ENCODE measurements at regions of chr19 and their contacts with region 1.

Region 1: GRCh38 chr19:45439569-45440254 is 16.0 kb upstream of the ERCC1 start:
- DNase-seq: peak; percentile 94
- ATAC-seq: peak; percentile 71

Region 2: DNA sequence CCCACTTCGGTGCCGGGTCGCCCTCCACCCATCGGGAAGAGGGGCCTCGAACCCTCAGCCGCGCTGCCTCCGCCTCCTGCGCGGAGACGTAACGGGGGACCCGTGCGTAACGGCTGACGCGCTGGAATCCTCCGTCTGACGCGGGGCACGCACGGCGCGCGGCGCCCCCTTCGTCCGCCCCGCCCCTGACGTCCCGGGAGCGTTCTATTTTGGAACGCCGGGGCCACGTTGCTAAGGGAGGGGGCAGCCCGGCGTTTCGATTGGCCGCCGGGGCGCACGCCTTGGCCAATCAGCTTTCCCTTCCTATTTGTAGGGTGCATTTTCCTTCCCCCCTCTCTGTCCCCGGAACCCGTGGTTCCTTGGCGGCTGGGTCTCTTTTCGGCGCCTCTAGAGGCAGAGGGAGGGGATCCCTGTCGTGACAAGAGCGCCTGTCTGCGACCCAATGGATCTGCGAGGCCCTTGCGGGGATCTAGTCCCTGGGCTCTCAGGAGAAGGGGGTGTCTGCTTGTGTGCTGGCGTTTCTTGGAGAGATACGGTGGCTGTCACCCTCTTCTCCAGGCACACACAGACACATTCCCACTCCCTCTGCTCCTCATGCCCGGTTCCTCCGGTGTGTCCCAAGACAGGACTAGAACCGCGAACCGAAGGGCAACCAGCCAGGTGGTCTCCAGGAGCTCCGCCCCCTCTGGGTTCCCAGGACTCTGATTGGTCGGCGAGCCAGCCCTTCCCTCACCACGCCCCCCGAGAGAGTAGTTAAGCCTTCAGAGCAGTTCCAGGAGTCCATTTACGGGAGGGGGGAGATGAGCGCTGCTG is 29.6 kb after region 1 on chr19:
- intact Hi-C with region 1: loop called (anchors 2 kb)
- DNase-seq: peak; percentile 98
- ATAC-seq: peak; percentile 93

Region 3: DNA sequence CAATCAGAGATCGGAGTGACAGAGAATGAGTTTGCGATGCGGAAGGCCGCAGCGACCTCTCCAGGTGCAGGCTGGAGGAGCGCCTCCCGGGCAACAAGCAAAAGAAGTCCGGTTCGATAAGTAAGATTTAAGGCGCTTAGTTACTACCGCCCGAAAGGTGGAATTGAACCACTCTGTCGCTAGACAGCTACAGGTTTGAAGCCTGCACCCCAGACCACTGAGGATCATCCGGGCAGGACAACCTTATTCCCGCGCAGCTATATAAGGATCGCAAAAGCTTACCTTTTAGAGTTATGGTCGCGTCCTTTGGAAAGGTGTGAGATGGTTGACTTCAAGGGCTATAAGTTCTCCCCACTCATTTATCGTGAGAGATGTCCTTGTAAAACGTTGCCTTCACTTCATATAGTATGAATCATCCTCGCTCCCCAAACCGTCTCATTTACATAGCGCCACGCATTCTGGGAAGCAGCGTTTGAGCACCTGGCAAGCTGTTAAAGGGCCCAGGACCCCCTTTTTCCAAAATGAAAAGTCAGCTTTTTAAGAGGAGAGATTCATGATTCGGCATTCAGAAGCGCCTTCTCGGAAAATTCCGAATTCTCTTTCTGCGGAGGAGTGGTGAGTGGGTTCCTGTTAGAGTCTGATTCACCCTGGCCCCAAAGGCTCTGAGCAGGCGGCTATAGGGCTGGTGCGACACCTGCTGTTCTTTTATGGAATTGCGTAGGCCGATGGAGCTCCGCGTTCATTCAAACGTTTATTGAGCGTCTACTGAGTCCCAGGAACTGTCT is 38.9 kb after region 1 on chr19:
- intact Hi-C with region 1: loop called (anchors 1 kb)
- DNase-seq: peak; percentile 92
- ATAC-seq: peak; percentile 95

Region 4: GRCh38 chr19:45523642-45524256 is 84.0 kb after region 1 on chr19:
- intact Hi-C with region 1: no loop called
- DNase-seq: peak; percentile 90
- ATAC-seq: peak; percentile 96